ENCODE measurements at regions of chr2 and their contacts with region 1.

Region 1: DNA sequence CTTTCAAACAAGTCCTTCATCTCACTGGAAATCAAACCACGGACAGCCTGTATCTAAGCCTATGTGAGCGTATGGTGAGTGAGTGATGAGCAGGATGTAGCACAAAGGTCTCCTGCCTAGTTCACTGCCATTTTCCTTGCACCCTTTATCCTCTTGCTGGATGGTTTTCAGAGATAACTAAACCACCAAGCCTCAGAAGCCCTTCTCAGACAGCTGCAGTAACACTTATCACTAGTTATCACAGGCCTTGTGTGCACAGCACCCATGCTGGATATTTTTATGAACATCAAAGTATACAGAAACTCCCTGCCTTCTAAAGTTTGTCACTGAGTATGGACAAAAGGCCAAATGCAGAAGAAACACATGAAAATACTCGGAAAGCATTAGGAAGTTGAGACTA is 69.5 kb downstream of the C1D start:
- DNase-seq: no peak
- ATAC-seq: no peak
- H3K4me3 ChIP-seq: no peak overlapping the region
- H3K27ac ChIP-seq: no peak overlapping the region
- H3K4me1 ChIP-seq: no peaks in the 10 kb centered on the region
- H3K27me3 ChIP-seq: peaks cover 0 to 3% (median 2%) of the 10 kb centered on the region in 3 donors
- CTCF ChIP-seq: no peak

Region 2: DNA sequence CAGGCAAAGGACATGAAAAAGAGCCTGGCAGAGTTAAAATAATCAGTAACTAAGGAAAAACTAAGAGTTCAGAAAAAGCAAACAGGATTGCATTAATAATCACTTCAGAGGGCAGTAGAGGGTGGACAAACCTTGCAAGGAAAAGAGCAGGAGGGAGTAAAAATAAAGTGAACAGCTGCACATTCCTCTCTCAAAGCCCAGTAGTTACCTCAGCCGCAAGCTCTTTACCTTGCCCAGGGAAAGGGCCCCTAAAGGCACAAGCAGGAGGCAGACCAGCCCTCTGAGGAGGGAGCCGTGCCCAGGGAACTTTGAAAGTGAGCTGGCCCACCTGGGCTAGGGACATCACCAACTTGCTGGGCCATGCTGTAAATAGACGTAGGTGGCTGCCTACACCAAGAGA is 127.4 kb before region 1 on chr2:
- intact Hi-C with region 1: no loop called
- DNase-seq: no peak
- ATAC-seq: no peak
- H3K4me3 ChIP-seq: no peak overlapping the region
- H3K27ac ChIP-seq: no peak overlapping the region
- H3K4me1 ChIP-seq: no peaks in the 10 kb centered on the region
- H3K27me3 ChIP-seq: peaks cover 2 to 6% (median 5%) of the 10 kb centered on the region in 3 donors
- CTCF ChIP-seq: no peak

Region 3: GRCh38 chr2:67974559-67975430 is 18.5 kb before region 1 on chr2:
- intact Hi-C with region 1: loop called in 1 of 2 experiments (anchors 1 kb)
- DNase-seq: peak in 1 of 2 donors; percentile 30
- ATAC-seq: no peak
- H3K4me3 ChIP-seq: no peak overlapping the region
- H3K27ac ChIP-seq: no peak overlapping the region
- H3K4me1 ChIP-seq: no peaks in the 10 kb centered on the region
- H3K27me3 ChIP-seq: peaks cover 0 to 10% (median 0%) of the 10 kb centered on the region in 3 donors
- CTCF ChIP-seq: no peak

Region 4: GRCh38 chr2:68423966-68424650 is 430.8 kb after region 1 on chr2:
- intact Hi-C with region 1: no loop called
- DNase-seq: no peak
- ATAC-seq: no peak
- H3K4me3 ChIP-seq: no peak overlapping the region
- H3K27ac ChIP-seq: no peak overlapping the region
- H3K4me1 ChIP-seq: no peaks in the 10 kb centered on the region
- H3K27me3 ChIP-seq: peaks cover 0 to 2% (median 2%) of the 10 kb centered on the region in 3 donors
- CTCF ChIP-seq: no peak

Measured in psoas muscle (tissue), 8 donors.